Heart right ventricle (tissue), 16 donors: ENCODE measurements at regions of chr1 and their contacts with region 1.

Region 1: DNA sequence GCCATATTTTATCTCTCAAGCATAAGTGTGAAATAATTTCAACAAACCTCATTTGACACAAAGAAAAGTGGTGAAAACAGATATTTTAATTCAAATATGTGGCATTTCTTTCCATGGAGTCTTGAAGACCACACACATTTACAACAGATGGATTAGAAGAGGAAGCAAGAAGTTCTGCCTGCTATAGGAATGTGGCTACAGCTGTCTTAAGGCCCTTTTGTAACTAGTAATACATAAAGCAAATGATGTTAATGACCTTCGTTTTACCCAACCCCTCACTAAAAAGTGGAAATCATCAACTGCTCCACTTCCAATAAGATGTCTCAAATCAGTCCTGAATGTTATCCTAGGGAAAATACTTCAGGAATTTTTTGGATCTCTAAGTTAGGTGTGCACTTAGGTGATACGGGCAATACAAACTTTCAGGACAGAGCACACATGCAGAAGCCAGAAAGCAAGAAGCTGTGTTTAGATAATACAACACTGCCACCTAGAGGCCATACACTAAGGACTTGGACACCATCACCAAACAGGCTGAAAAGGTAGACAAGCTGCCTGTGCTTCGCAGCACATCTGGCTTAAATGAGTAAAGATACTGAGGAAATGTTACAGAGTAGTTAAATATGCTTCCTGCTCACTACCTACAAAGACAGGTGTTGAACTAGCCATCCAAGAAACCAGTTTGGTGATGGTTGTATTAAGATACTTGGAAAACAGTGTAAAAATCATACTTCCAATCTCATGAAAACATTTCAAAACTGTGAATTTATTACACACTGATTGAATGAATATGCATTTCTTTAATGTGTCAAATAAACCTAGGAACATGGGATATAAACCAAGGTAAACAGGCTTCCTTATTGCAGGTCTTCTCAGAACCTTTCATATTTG is 24.4 kb downstream of the RRAGC start:
- DNase-seq: peak in 1 of 2 donors; percentile 73
- ATAC-seq: peak; percentile 76 to 85 (median 82)
- H3K4me3 ChIP-seq: no peak overlapping the region
- H3K27ac ChIP-seq: no peak overlapping the region
- H3K4me1 ChIP-seq: peaks cover 0 to 22% (median 15%) of the 10 kb centered on the region in 9 donors
- H3K27me3 ChIP-seq: peaks cover 0 to 18% (median 7%) of the 10 kb centered on the region in 7 donors
- CTCF ChIP-seq: peak; percentile 59 to 90 (median 85)

Region 2: GRCh38 chr1:38026592-38027200 is 808.5 kb before region 1 on chr1:
- intact Hi-C with region 1: loop called in 7 of 10 experiments (anchors 5 to 10 kb)
- DNase-seq: peak in 1 of 2 donors; percentile 35
- ATAC-seq: peak in 1 of 8 donors; percentile 17
- H3K4me3 ChIP-seq: no peak overlapping the region
- H3K27ac ChIP-seq: no peak overlapping the region
- H3K4me1 ChIP-seq: peaks cover 11 to 42% (median 26%) of the 10 kb centered on the region in 9 donors
- H3K27me3 ChIP-seq: no peaks in the 10 kb centered on the region
- CTCF ChIP-seq: peak; percentile 18 to 66 (median 55)

Region 3: DNA sequence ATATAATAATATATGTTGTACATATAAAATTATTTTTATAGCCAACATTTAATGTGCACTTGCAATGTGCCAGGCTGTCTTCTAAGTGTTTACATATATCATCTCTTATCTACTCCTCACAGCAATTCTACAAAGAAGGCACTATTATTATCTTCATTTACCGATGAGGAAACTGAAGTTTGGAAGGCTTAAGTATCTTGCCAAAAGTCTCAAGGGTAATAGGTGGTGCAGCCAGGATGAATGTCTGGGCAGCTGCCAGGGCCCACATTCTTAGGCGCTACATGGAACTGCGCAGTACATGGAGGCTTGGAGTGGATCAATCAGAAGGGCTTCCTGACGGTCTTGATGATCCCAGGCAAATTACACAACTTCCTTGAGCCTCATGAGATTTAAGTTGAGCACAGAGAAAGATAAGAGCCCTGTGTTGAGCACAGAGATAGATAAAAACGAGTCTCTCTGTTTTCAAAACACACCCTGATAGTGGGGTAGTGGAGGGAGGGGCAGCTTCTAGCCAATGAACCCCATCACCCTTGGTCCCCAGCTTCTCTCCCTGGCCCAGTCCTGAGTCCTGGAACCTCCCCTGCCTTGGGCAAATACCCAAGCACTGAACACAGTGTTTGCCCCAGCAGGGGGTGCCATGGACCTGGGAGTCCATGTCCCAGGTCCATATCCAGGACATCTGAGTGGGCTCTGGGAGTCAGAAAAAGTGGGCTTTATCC is 797.8 kb before region 1 on chr1:
- intact Hi-C with region 1: loop called in 2 of 10 experiments (anchors 5 to 10 kb)
- DNase-seq: no peak
- ATAC-seq: no peak
- H3K4me3 ChIP-seq: no peak overlapping the region
- H3K27ac ChIP-seq: no peak overlapping the region
- H3K4me1 ChIP-seq: no peaks in the 10 kb centered on the region
- H3K27me3 ChIP-seq: peaks cover 2 to 37% (median 33%) of the 10 kb centered on the region in 7 donors
- CTCF ChIP-seq: peak in 3 of 9 donors; percentile 8 to 26 (median 12)

Region 4: GRCh38 chr1:38608202-38608864 is 226.8 kb before region 1 on chr1:
- intact Hi-C with region 1: loop called in 1 of 10 experiments (anchors 5 kb)
- DNase-seq: peak; percentile 16 to 36
- ATAC-seq: peak in 1 of 8 donors; percentile 72
- H3K4me3 ChIP-seq: no peak overlapping the region
- H3K27ac ChIP-seq: no peak overlapping the region
- H3K4me1 ChIP-seq: no peaks in the 10 kb centered on the region
- H3K27me3 ChIP-seq: peaks cover 0 to 57% (median 17%) of the 10 kb centered on the region in 7 donors
- CTCF ChIP-seq: peak in 8 of 9 donors; percentile 18 to 71 (median 59)

Region 5: DNA sequence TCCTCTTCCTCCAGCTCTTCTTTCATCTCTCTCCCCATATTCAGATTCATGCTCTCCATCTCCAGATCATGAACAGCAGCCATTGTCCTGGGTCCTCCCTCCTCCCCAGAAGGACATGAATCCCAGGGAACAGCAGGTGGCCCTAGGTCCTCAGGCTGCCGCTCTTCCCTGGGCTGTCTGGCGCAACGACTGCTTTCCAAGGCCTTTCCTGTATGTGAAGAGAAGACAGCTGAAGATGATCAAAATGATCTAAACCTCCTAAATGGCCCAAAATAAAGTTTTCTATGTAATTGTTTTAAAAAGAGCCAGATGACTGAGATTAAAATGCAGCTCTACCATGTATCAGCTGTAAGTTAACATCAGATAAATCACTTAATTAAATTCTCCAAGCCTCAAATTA is 83.9 kb after region 1 on chr1:
- intact Hi-C with region 1: no loop called
- DNase-seq: no peak
- ATAC-seq: peak in 2 of 8 donors; percentile 45 to 51
- H3K4me3 ChIP-seq: no peak overlapping the region
- H3K27ac ChIP-seq: no peak overlapping the region
- H3K4me1 ChIP-seq: no peaks in the 10 kb centered on the region
- H3K27me3 ChIP-seq: no peaks in the 10 kb centered on the region
- CTCF ChIP-seq: peak in 4 of 9 donors; percentile 10 to 33 (median 20)